Activated CD4-positive, alpha-beta memory T cell treated with anti-CD3 and anti-CD28 coated beads for 36 hours (primary cell): ENCODE measurements at regions of chr13 and their contacts with region 1.

Region 1: GRCh38 chr13:42594970-42595571 is 21.1 kb downstream of the TNFSF11 start:
- DNase-seq: peak; percentile 67
- H3K4me3 Mint-ChIP-seq: no peak overlapping the region
- H3K27ac Mint-ChIP-seq: no peak overlapping the region
- H3K4me1 Mint-ChIP-seq: peaks cover under 1% of the 10 kb centered on the region
- H3K27me3 Mint-ChIP-seq: no peaks in the 10 kb centered on the region

Region 2: GRCh38 chr13:42548731-42549551 is 46.1 kb before region 1 on chr13:
- CTCF ChIA-PET with region 1: no interaction called
- POLR2A ChIA-PET with region 1: no interaction called
- intact Hi-C with region 1: no loop called
- DNase-seq: no peak
- H3K4me3 Mint-ChIP-seq: no peak overlapping the region
- H3K27ac Mint-ChIP-seq: no peak overlapping the region
- H3K4me1 Mint-ChIP-seq: peaks cover 22% of the 10 kb centered on the region
- H3K27me3 Mint-ChIP-seq: peaks cover 2% of the 10 kb centered on the region

Region 3: GRCh38 chr13:42652642-42653415 is 57.8 kb after region 1 on chr13:
- CTCF ChIA-PET with region 1: no interaction called
- POLR2A ChIA-PET with region 1: no interaction called
- intact Hi-C with region 1: no loop called
- DNase-seq: no peak
- H3K4me3 Mint-ChIP-seq: no peak overlapping the region
- H3K27ac Mint-ChIP-seq: no peak overlapping the region
- H3K4me1 Mint-ChIP-seq: no peaks in the 10 kb centered on the region
- H3K27me3 Mint-ChIP-seq: peaks cover 42% of the 10 kb centered on the region

Region 4: DNA sequence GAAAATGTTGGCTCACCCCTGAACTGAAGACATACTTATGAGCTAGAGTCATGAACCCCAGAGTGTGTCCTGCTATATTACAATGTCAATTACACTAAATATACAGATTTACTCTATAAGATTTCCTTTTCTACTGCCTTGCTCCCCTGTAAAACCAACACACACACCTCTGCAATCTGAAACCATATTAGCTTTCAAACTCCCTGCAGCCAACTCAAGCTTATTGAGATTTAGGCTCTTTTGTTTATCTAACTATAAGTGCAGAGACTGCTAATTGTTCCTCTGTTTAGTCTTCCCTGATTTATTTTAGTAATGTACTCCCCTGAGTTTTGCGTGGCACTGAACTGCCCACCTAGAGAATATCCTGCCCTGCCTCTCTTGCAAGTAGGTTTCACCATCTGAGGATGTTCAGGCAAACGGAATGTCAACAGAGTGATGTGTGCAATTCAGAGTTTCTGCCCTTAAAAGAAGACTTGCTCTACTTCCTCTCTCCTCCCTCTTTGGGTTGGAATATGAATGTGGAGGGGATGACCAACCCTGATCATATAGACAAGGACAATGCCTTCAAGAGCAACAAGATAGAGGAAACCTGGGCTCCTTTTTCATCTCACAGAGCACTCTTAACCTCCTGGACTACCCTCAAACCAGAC is 208.6 kb after region 1 on chr13:
- CTCF ChIA-PET with region 1: interaction called, 3 read pairs
- POLR2A ChIA-PET with region 1: no interaction called
- intact Hi-C with region 1: loop called (anchors 10 kb)
- DNase-seq: no peak
- H3K4me3 Mint-ChIP-seq: no peak overlapping the region
- H3K27ac Mint-ChIP-seq: no peak overlapping the region
- H3K4me1 Mint-ChIP-seq: no peaks in the 10 kb centered on the region
- H3K27me3 Mint-ChIP-seq: peaks cover 6% of the 10 kb centered on the region

Region 5: DNA sequence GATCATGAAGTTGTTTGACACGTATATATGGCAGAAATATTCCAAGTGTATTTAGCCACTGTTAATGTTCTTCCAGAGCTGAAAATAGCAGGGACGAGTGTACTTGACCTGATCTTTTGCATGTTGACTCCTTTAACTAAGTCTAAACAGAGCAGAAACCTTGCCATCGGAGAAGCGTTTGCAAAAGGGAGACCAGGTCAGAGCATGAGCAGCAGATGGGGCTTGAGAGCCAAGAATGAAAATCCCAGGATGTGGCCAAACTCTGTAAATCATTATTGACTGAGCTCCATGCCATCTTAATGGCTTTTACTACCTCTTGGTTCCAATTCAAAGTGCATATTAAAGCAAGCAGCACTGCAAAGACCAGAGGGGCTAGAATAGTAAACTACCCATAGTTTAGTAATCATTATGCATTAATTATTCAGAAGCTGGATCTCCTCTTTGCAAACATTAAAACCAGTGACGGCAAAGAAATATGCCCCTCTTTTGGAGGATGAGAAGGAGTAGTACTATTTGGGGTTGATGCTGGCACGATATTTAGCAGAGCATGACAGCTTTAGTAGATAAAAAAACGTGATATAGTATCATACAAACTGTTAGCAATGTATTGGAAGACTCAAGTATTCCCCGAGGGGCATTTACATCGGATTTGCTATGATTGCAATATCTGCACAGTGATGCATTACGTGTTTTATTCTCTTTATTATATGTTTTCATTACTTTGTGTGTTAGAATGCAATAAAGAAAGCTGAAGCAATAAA is 242.0 kb after region 1 on chr13:
- CTCF ChIA-PET with region 1: no interaction called
- POLR2A ChIA-PET with region 1: no interaction called
- intact Hi-C with region 1: no loop called
- DNase-seq: no peak
- H3K4me3 Mint-ChIP-seq: no peak overlapping the region
- H3K27ac Mint-ChIP-seq: no peak overlapping the region
- H3K4me1 Mint-ChIP-seq: peaks cover 3% of the 10 kb centered on the region
- H3K27me3 Mint-ChIP-seq: peaks cover 1% of the 10 kb centered on the region

Region 6: GRCh38 chr13:42875475-42876269 is 280.6 kb after region 1 on chr13:
- CTCF ChIA-PET with region 1: no interaction called
- POLR2A ChIA-PET with region 1: no interaction called
- intact Hi-C with region 1: loop called (anchors 10 kb)
- DNase-seq: peak; percentile 9
- H3K4me3 Mint-ChIP-seq: no peak overlapping the region
- H3K27ac Mint-ChIP-seq: no peak overlapping the region
- H3K4me1 Mint-ChIP-seq: peaks cover 19% of the 10 kb centered on the region
- H3K27me3 Mint-ChIP-seq: peaks cover 5% of the 10 kb centered on the region